ENCODE measurements at regions of chr16 and their contacts with region 1.

Region 1: DNA sequence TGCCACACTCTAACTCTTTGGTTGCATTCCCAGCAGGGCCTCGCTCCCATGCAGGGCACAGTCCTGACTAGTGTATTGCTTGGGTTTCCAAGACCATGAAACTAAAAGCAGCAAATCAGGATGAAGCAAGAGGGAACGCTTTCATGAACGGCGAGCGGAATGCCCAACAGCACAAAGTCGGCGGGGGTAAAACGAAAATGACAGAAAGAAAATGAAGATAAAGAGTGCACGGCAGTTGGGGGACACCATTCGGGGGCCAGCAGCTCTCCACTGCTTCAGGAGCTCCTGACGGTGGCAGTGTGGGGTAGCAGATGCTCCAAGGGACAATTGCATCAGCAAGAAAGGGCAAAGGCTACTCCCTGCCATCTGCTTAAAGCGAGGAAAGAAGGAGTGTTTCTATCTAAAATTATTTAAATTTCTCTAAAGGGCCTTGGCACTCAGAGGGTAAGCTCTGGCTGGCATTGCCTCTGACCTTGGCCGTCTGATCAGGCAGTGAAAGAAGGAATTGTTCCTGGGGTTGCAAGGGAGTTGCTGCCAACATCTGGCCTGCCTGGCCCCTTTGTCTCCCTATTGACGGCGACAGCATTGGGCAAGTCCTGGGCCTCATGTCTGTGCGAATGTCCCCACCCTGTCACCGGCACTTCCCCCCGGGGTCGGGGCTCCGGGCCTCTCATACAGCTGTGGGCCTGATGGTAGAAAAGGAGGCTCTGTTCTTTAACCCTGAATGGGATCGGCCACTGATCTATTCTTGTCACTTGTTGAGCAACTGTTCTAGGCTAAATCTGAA is 138.2 kb downstream of the CMIP start:
- DNase-seq: peak; percentile 79
- ATAC-seq: peak; percentile 69
- H3K4me3 ChIP-seq: no peak overlapping the region
- H3K27ac ChIP-seq: peak overlapping the region; percentile 58
- H3K4me1 ChIP-seq: peaks cover 85% of the 10 kb centered on the region
- H3K27me3 ChIP-seq: no peaks in the 10 kb centered on the region
- CTCF ChIP-seq: peak; percentile 82
- EP300 ChIP-seq: peak; percentile 51 to 72; a peak in 2 of 4 replicates
- POLR2A ChIP-seq: 0 out of 4 replicates have a peak, but pooled peaks of 1 of the 2 experiments have one; percentile 21
- RAD21 ChIP-seq: no peak

Region 2: DNA sequence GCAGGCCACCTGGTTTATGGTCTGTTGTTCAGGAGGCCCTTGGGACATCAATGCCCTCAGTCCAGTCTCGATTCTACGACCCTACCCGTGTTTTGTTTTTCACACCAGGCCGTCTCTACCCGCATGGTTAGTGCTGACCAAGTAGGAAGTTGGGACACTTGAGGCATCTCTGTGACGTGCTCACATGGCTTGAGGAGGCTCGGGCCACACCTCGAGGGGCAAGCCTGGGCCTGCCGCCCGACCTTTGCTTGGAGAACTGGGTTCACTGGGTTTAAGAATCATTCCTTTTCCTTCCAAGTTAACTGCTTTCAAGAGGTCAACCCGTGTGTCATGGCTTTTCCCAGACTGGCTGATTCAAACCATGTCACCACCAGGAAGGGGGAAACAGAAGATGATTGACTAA is 51.4 kb before region 1 on chr16:
- CTCF ChIA-PET with region 1: no interaction called
- POLR2A ChIA-PET with region 1: interaction called, 8 read pairs
- in situ Hi-C with region 1: no loop called
- intact Hi-C with region 1: loop called (anchors 5 kb)
- DNase-seq: no peak
- ATAC-seq: no peak
- H3K4me3 ChIP-seq: no peak overlapping the region
- H3K27ac ChIP-seq: peak overlapping the region; percentile 20
- H3K4me1 ChIP-seq: peaks cover 92% of the 10 kb centered on the region
- H3K27me3 ChIP-seq: no peaks in the 10 kb centered on the region
- CTCF ChIP-seq: no peak
- EP300 ChIP-seq: no peak
- POLR2A ChIP-seq: no peak
- RAD21 ChIP-seq: no peak

Region 3: DNA sequence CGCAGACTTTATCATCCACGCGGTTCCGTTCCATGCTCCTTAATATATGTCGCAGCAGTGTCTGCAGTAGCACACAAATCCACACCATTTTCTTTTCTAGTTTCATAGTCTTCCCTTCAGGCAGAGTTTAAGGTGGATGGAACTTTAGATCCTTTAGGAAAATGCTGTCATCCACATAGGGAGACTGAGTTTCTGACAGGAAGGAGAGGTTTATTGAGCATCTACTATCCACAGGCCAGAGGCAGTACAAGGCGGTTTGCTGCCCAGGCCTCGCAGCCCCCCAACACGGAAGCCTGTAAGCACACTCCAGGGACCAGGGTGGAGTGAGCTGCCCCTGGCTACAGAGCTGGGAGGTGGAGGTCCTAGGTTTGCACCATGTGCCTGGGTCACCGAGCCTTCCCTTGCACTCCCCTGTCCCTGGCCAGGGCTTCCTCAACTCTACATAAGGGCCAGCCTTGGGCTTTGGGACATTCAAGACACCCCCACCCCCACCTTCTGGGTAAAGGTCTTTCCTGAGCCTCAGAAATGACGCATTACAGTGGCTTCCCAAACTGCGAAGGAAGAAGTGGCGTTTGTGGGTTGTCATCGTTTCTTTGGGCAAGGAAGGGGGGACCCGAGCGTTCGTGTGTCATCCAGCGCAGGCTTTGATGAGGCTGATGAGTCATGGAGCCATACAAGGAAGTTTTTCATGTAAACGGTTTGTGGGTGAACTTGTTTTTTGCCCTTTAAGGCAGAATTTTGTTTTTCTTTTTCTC is 49.7 kb after region 1 on chr16:
- CTCF ChIA-PET with region 1: no interaction called
- POLR2A ChIA-PET with region 1: no interaction called
- in situ Hi-C with region 1: no loop called
- intact Hi-C with region 1: no loop called
- DNase-seq: no peak
- ATAC-seq: no peak
- H3K4me3 ChIP-seq: no peak overlapping the region
- H3K27ac ChIP-seq: peak overlapping the region; percentile 27
- H3K4me1 ChIP-seq: peaks cover 64% of the 10 kb centered on the region
- H3K27me3 ChIP-seq: no peaks in the 10 kb centered on the region
- CTCF ChIP-seq: no peak
- EP300 ChIP-seq: no peak
- POLR2A ChIP-seq: no peak
- RAD21 ChIP-seq: no peak

Region 4: DNA sequence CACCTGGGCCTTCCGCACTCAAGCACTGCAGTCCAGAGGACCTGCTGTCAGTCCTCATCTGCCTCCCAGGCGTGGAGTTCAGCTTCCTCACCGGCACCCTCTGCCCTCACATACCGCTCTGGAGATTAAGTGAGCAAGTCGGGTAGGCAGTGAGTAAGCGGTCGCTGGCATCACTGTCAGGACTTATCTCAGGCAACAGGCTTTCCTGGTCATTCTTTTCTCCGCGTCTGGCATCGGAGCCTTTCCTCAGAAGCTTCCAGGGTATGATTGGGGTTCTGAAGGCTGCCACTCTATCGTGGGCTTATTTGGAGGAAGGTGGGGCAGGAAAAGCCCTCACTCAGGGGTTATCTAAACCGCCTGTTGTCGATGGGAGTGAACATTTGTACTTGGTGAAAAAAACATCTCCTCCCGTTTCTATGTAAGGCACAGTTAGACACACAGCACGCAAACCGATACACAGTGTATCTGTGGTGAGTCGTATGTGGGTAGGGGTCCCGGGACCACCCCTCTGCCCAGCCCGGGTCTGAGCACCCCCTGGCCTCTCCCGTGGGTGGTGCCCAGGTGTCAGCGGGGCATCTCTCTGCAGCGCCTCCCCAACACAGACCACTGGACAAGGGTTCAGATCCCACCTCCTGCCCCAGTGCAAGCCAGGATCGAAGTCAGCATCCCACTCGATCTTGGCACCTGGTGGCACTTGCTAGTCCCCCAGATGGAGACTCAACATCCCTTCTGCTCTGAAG is 103.7 kb after region 1 on chr16:
- CTCF ChIA-PET with region 1: no interaction called
- POLR2A ChIA-PET with region 1: no interaction called
- in situ Hi-C with region 1: no loop called
- intact Hi-C with region 1: no loop called
- DNase-seq: no peak
- ATAC-seq: no peak; the same call in 2 of the 3 replicates
- H3K4me3 ChIP-seq: no peak overlapping the region
- H3K27ac ChIP-seq: no peak overlapping the region
- H3K4me1 ChIP-seq: no peaks in the 10 kb centered on the region
- H3K27me3 ChIP-seq: no peaks in the 10 kb centered on the region
- CTCF ChIP-seq: no peak
- EP300 ChIP-seq: no peak
- POLR2A ChIP-seq: no peak
- RAD21 ChIP-seq: no peak